Lower leg skin (tissue), 4 donors: ENCODE measurements at regions of chr14 and their contacts with region 1.

Region 1: DNA sequence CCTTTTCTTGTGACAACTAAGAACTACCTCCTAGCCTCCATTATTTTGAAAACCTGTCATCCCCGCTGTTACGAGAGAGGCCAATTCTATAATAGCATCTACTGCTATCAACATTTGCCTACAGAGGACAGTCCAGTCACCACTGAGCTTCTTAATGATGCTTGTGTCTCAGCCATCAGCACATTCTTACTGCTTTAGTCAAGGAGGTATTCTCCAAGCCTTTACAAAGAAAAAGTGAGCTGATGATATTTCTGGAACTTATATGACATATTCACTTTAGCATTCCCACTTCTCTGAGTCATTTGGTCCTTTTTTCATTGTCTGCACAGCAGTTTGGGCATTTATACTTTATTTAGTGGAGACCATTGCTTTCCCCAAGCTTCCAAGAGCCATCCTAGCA is 497.7 kb upstream of the RPL10L start:
- DNase-seq: no peak
- H3K4me3 ChIP-seq: no peak overlapping the region
- CTCF ChIP-seq: no peak
- POLR2A ChIP-seq: no peak

Region 2: GRCh38 chr14:47822326-47822725 is 673.0 kb after region 1 on chr14:
- intact Hi-C with region 1: loop called (anchors 5 kb)
- DNase-seq: no peak
- H3K4me3 ChIP-seq: no peak overlapping the region
- CTCF ChIP-seq: no peak
- POLR2A ChIP-seq: no peak